Posterior cingulate gyrus (tissue), 11 donors: ENCODE measurements at regions of chr4 and their contacts with region 1.

Region 1: GRCh38 chr4:53855581-53856250 is 208.7 kb downstream of the CHIC2 start:
- DNase-seq: no peak

Region 2: DNA sequence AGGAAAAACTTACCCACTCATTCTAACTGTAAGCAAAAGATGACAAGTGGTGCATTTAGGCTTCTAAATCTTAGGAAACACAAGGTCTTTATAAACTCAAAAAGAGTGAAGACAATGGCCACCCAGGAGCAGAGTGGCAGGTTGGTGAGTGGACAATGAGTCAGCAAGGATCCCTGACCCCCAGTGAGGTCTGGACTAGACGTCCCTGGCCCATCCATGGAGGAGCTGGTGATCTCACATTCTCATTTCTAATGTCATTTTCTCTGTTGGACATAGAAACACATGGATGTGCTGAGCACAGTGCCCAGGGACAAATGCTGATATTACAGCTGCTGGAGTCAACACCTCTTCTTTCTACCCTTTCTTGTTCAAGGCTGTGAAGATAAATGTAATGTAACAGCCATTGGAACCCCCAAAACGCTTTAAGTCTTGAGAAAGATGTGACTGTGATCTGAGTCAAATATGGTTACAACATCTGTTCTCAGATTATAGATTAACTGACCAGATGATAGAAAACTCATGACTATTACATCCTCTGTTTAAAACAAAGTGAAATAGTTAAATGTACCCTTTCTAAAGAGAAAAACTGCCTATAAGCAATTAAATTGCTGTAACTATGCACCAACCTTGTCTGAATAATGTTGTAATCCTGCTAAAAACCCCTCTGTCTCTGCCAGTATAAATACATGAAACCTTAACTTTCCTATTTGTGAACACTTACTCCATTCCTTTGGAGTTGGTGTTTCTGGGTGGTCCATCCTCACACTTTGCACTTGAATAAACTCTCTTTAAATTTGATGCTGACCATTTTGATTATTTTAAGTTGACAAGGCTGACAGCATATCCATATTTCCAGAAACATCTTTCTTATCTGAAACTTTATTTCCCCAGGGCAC is 1289.3 kb before region 1 on chr4:
- intact Hi-C with region 1: no loop called
- DNase-seq: no peak

Region 3: GRCh38 chr4:53640576-53641453 is 214.9 kb before region 1 on chr4:
- intact Hi-C with region 1: loop called (anchors 5 kb)
- DNase-seq: peak in 2 of 10 donors; percentile 66 to 73

Region 4: GRCh38 chr4:53943345-53944085 is 87.8 kb after region 1 on chr4:
- intact Hi-C with region 1: no loop called
- DNase-seq: no peak